ENCODE measurements at regions of chr2 and their contacts with region 1.

Region 1: DNA sequence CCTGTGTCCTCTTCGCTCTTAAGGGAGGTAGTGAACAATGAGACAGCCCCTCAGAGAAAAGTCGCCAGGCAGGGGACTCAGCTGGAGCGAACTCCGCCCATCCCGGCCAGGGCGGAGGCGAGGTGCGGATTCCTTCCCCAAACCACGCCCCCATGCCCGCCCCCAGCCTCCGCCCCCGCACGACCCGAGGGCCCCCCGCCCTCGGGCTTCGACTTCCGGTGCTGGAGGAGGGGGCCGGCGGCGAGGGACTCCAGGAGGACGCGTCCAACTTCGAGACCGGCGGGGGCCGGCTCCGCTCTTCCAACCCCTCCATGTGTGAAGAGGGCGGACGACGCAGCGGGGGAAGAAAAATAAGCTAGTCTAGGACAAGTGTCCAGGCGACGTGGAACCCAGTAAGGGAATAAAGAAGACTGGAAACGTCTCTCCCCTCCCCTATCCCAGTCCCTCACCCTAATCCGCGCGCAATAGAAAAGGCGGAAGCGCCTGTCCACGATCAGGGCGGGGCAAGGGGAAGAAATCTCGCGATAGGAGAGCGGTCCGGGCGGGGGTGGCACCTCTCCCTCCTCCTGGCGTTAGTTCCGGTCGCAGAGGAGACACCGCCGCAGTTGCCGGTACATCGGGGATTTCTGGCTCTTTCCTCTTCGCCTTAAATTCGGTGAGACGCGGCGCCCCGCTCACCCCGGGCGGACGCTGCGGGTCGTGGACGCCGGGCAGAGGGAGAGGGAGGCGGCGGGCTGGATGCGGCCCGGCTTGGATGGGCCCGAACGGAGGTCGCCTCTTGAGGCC is at the start of gene BZW1:
- DNase-seq: peak; percentile 98
- H3K4me3 ChIP-seq: peak within 1 kb of the TSS; percentile 95
- H3K27ac ChIP-seq: peak within 1 kb of the TSS; percentile 99
- H3K4me1 ChIP-seq: peaks cover 29% of the 10 kb centered on the region
- H3K27me3 ChIP-seq: no peaks in the 10 kb centered on the region
- CTCF ChIP-seq: no peak
- total RNA-seq, gene BZW1: 321 and 396 TPM in 2 replicates

Region 2: DNA sequence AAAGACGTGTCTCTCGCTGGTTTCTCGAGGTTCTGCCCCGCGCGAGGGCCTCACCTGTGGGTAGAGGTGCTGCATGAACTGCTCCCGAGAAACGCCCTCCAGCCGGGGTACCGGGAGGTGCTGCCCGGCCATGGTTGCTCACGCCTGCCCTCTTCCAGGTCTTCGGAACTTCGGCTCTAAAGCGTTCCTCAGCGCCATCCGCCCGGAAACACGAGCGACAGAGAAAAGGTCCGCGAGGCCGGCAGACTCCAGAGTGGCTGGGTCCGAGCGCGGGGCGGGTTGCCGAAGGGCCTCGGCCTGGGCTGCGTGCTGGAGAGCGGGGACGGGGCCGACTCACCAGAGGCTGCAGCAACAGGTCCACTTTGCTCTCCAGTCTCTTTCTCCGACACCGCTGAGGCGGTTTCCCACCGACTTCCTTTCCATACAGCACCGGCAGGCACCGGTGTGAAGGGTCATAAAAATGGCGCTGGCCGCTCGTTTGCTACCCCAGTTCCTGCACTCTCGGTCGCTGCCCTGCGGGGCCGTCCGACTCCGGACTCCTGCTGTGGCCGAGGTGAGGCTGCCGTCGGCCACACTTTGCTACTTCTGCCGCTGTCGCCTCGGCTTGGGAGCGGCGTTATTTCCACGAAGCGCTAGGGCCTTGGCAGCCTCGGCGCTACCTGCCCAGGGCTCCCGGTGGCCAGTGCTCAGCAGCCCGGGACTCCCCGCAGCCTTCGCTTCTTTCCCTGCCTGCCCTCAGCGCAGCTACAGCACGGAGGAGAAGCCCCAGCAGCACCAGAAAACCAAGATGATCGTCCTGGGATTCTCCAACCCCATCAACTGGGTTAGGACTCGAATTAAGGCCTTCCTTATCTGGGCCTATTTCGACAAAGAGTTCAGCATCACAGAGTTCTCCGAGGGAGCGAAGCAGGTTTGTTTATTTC is 855.9 kb before region 1 on chr2 and contains the starts of genes MAIP1 and TYW5:
- CTCF ChIA-PET with region 1: no interaction called
- POLR2A ChIA-PET with region 1: no interaction called
- intact Hi-C with region 1: loop called (anchors 5 kb)
- DNase-seq: peak; percentile 88
- H3K4me3 ChIP-seq: peak within 1 kb of the TSS; percentile 67
- H3K27ac ChIP-seq: peak within 1 kb of the TSS; percentile 98
- H3K4me1 ChIP-seq: peaks cover 9% of the 10 kb centered on the region
- H3K27me3 ChIP-seq: no peaks in the 10 kb centered on the region
- CTCF ChIP-seq: 0 out of 2 replicates have a peak, but pooled peaks have one; percentile 19
- total RNA-seq, gene MAIP1: 31.0 TPM in 2 replicates
- total RNA-seq, gene TYW5: 6.9 and 8.1 TPM in 2 replicates

Region 3: GRCh38 chr2:200864176-200864976 is 52.8 kb after region 1 on chr2 and contains the start of gene CLK1:
- CTCF ChIA-PET with region 1: no interaction called
- POLR2A ChIA-PET with region 1: no interaction called
- intact Hi-C with region 1: loop called (anchors 2 kb)
- DNase-seq: peak; percentile 97
- H3K4me3 ChIP-seq: peak within 1 kb of the TSS; percentile 70
- H3K27ac ChIP-seq: peak within 1 kb of the TSS; percentile 98
- H3K4me1 ChIP-seq: peaks cover 10% of the 10 kb centered on the region
- H3K27me3 ChIP-seq: no peaks in the 10 kb centered on the region
- CTCF ChIP-seq: no peak
- total RNA-seq, gene CLK1: 69.6 and 73.3 TPM in 2 replicates

Region 4: GRCh38 chr2:201118121-201118960 is 306.8 kb after region 1 on chr2:
- CTCF ChIA-PET with region 1: no interaction called
- POLR2A ChIA-PET with region 1: no interaction called
- intact Hi-C with region 1: loop called (anchors 10 kb)
- DNase-seq: peak; percentile 91
- H3K4me3 ChIP-seq: peak overlapping the region; percentile 76
- H3K27ac ChIP-seq: peak overlapping the region; percentile 98
- H3K4me1 ChIP-seq: peaks cover 23% of the 10 kb centered on the region
- H3K27me3 ChIP-seq: no peaks in the 10 kb centered on the region
- CTCF ChIP-seq: peak; percentile 59